Activated B cell treated with CpG ODN at 0.5 μM for 24 hours (primary cell): ENCODE measurements at regions of chr17 and their contacts with region 1.

Region 1: DNA sequence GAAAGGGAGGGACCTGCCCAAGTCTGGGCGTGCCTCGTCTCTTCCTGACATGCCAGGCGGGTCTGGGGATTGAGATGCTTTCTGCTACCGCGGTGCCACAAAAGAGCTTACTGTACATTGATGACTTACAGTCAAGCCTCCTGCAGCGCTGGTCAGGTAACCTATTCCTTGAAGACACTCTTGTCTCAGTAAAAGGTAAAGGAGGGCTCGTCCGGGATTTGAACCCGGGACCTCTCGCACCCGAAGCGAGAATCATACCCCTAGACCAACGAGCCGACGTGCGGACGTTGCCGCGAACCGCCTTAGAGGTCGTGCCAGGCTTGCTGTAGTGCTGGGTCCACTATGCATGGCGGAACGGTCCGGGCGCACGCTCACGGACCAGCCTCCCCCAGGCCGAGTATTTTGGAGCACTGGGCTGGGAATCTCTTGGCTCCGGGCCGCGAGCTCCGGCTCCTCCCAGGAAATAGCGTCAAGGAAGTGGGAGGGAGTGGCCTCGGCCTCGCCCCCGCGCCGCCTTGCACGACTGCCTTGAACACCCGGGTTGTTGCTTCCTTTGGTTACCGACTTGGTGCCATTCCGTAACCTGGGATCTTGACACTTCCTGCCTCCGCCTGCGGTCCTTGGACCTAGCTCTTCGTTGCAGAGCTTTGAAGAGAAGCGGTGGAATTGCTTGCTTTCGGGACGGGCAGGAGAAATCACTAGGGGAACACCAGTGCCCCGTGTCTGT is 12.4 kb upstream of the AURKB start:
- DNase-seq: peak; percentile 80
- ATAC-seq: peak; percentile 51
- H3K4me3 Mint-ChIP-seq: peak overlapping the region; percentile 97
- H3K27ac Mint-ChIP-seq: peak overlapping the region; percentile 97
- H3K4me1 Mint-ChIP-seq: peaks cover 68% of the 10 kb centered on the region
- H3K27me3 Mint-ChIP-seq: peaks cover 11% of the 10 kb centered on the region
- CTCF ChIP-seq: no peak

Region 2: DNA sequence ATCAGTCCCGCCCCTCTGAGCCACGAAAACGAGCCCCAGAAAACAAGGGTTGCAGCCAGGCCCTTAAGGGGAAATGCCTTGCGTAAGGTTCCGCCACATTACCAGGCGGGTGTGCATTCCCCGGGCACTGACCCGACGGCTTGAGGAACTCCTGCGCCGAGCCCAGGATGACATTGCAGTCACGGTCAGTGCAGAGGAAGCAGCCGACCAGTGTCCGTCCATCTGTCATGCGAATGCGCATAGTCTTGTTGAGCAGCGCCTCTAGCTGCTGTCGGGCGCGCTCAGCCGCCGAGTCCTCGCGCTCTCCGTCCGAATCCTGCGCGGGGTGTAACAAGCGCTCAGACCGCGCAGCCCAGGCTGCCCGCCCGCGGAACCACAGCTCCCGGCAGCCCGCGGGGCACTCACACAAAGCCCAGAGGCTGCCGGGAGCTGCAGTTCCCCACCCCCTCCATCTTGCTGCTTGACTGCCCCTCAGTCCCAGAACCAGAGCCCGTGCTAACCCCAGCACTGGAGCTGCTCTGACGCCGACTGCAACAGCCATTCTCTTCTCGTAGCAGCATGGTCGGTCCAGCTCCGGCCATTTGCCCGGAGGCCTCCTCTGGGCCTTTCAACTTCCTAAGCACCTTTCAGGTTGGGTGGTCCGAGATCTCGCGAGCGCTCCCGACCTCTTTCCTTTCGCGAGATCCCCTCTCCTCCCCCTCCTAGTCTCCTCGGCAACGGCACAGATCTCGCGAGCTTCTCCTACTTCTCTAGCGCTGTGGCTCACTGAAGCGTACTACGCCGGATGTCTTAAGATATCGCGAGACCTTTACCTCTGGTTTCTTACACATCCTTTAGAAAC is 365.7 kb before region 1 on chr17 and contains the start of gene NAA38:
- CTCF ChIA-PET with region 1: no interaction called
- POLR2A ChIA-PET with region 1: interaction called, 10 read pairs
- intact Hi-C with region 1: loop called (anchors 10 kb)
- DNase-seq: peak; percentile 88
- ATAC-seq: peak; percentile 83
- H3K4me3 Mint-ChIP-seq: no peak within 1 kb of the TSS
- H3K27ac Mint-ChIP-seq: no peak within 1 kb of the TSS
- H3K4me1 Mint-ChIP-seq: peaks cover 5% of the 10 kb centered on the region
- H3K27me3 Mint-ChIP-seq: no peaks in the 10 kb centered on the region
- CTCF ChIP-seq: no peak
- total RNA-seq, gene NAA38: 36.0 and 47.9 TPM in 2 replicates

Region 3: DNA sequence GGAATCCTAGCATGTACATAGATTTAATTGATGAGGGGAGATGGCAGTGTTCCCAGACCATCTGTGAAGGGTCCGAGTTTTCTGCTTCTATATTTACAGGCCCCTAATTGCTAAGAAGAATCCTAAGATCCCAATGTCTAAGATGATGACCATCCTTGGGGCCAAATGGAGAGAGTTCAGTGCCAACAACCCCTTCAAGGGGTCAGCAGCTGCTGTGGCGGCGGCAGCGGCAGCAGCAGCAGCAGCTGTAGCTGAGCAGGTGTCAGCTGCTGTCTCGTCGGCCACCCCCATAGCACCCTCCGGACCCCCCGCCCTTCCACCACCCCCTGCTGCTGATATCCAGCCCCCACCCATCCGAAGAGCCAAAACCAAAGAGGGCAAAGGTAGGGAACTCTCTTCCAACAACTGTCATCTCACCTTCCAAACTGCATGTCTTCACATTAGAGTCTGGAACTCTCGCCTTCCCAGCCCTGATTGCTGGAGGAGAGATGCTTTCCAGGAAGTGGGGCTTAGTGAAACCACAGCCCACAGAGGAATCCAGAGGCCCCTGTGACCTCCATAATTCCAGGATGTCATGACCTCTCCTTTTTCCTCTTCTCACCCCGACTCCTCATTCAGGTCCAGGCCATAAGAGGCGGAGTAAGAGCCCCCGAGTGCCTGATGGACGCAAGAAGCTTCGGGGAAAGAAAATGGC is 329.5 kb before region 1 on chr17:
- CTCF ChIA-PET with region 1: no interaction called
- POLR2A ChIA-PET with region 1: no interaction called
- intact Hi-C with region 1: no loop called
- DNase-seq: no peak
- ATAC-seq: no peak
- H3K4me3 Mint-ChIP-seq: no peak overlapping the region
- H3K27ac Mint-ChIP-seq: no peak overlapping the region
- H3K4me1 Mint-ChIP-seq: no peaks in the 10 kb centered on the region
- H3K27me3 Mint-ChIP-seq: no peaks in the 10 kb centered on the region
- CTCF ChIP-seq: no peak

Region 4: GRCh38 chr17:8118769-8119580 is 103.8 kb before region 1 on chr17:
- CTCF ChIA-PET with region 1: interaction called, 21 read pairs
- POLR2A ChIA-PET with region 1: interaction called, 45 read pairs
- intact Hi-C with region 1: loop called (anchors 1 kb)
- DNase-seq: peak; percentile 81
- ATAC-seq: peak; percentile 68
- H3K4me3 Mint-ChIP-seq: peak overlapping the region; percentile 93
- H3K27ac Mint-ChIP-seq: peak overlapping the region; percentile 96
- H3K4me1 Mint-ChIP-seq: peaks cover 58% of the 10 kb centered on the region
- H3K27me3 Mint-ChIP-seq: peaks cover 56% of the 10 kb centered on the region
- CTCF ChIP-seq: peak; percentile 26

Region 5: DNA sequence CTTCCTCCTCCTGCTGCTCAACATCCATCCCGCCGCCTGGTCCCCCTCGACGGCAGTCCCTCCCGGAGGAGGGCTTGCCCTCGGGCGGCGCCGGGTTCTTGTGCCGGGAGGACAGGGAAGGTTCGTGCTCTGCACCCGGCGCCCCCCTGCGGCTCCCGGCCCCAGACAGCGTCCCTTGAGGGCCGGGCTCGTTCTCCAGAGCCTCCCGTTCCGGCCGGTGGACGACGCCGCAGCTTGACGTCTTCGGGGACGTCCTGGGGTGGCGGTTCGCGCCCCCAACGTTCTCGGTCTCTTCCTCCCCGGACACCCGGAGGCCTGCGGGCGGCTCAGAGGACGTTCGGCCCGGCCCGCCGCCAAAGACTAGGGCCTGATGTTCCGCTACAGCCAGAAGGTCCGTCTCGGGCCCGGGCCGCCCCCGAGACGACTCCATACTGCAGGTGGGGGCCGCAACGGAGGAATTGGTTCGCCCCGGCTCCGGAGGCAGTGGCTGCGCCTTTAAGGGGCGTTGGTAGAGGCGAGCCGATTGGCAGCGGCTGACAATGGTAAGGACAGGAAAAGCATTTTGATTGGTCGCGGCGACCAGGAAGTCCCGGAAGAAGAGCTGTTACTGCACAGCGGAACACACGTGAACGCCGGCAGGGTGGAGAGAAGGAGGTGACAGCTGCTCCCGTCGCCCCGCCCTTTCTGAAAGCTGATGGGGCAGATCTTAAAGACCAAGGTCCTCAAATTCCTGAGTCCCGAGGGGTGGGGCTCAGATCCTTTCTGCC is 32.9 kb before region 1 on chr17 and contains the start of gene BORCS6:
- CTCF ChIA-PET with region 1: interaction called, 20 read pairs
- POLR2A ChIA-PET with region 1: interaction called, 316 read pairs
- intact Hi-C with region 1: loop called (anchors 1 kb)
- DNase-seq: peak; percentile 84
- ATAC-seq: peak; percentile 67
- H3K4me3 Mint-ChIP-seq: no peak within 1 kb of the TSS
- H3K27ac Mint-ChIP-seq: peak within 1 kb of the TSS; percentile 95
- H3K4me1 Mint-ChIP-seq: peaks cover 11% of the 10 kb centered on the region
- H3K27me3 Mint-ChIP-seq: no peaks in the 10 kb centered on the region
- CTCF ChIP-seq: no peak
- total RNA-seq, gene BORCS6: 12.3 and 12.8 TPM in 2 replicates

Region 6: GRCh38 chr17:8237175-8237574 is 14.4 kb after region 1 on chr17:
- CTCF ChIA-PET with region 1: no interaction called
- POLR2A ChIA-PET with region 1: interaction called, 10 read pairs
- intact Hi-C with region 1: loop called (anchors 1 kb)
- DNase-seq: no peak
- ATAC-seq: no peak
- H3K4me3 Mint-ChIP-seq: no peak overlapping the region
- H3K27ac Mint-ChIP-seq: no peak overlapping the region
- H3K4me1 Mint-ChIP-seq: peaks cover 2% of the 10 kb centered on the region
- H3K27me3 Mint-ChIP-seq: no peaks in the 10 kb centered on the region
- CTCF ChIP-seq: no peak

Region 7: GRCh38 chr17:8288336-8289102 is 65.7 kb after region 1 on chr17 and contains the start of gene RANGRF:
- CTCF ChIA-PET with region 1: no interaction called
- POLR2A ChIA-PET with region 1: interaction called, 68 read pairs
- intact Hi-C with region 1: loop called (anchors 1 kb)
- DNase-seq: peak; percentile 77
- ATAC-seq: peak; percentile 93
- H3K4me3 Mint-ChIP-seq: peak within 1 kb of the TSS; percentile 98
- H3K27ac Mint-ChIP-seq: peak within 1 kb of the TSS; percentile 97
- H3K4me1 Mint-ChIP-seq: peaks cover 51% of the 10 kb centered on the region
- H3K27me3 Mint-ChIP-seq: no peaks in the 10 kb centered on the region
- CTCF ChIP-seq: no peak
- total RNA-seq, gene RANGRF: 50.1 and 50.9 TPM in 2 replicates

Region 8: DNA sequence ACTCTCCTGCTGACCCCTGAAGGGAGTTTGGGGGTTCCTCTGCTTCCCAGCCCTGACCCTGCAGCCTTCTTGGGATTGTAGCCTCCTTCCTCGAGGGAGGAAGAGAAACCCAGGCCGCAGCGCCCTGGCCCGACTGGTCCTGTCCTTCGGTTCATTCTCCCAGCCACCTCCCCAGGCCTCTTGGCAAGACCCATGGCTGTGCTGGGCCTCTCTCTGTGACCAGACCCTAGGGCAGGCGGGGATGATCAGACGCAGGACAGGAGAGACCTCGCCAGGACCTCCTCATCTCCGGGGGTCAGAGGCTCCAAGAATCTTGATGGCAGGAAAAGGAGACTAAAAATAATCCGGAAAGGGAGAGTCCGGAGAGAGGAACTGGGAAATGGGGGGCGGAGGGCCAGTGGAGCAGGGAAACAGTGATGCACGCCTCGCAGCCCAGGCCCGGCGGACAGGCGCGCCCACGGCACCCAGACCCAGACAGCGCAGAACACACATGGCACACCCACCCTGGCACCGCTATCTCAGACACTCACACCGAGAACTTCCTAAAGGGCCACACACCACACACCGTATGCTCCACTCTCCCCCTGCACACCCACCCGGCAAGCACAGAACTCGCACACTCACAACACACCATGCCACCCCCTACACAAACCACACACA is 88.5 kb after region 1 on chr17:
- CTCF ChIA-PET with region 1: no interaction called
- POLR2A ChIA-PET with region 1: no interaction called
- intact Hi-C with region 1: no loop called
- DNase-seq: no peak
- ATAC-seq: no peak
- H3K4me3 Mint-ChIP-seq: no peak overlapping the region
- H3K27ac Mint-ChIP-seq: no peak overlapping the region
- H3K4me1 Mint-ChIP-seq: no peaks in the 10 kb centered on the region
- H3K27me3 Mint-ChIP-seq: peaks cover 37% of the 10 kb centered on the region
- CTCF ChIP-seq: no peak

Region 9: DNA sequence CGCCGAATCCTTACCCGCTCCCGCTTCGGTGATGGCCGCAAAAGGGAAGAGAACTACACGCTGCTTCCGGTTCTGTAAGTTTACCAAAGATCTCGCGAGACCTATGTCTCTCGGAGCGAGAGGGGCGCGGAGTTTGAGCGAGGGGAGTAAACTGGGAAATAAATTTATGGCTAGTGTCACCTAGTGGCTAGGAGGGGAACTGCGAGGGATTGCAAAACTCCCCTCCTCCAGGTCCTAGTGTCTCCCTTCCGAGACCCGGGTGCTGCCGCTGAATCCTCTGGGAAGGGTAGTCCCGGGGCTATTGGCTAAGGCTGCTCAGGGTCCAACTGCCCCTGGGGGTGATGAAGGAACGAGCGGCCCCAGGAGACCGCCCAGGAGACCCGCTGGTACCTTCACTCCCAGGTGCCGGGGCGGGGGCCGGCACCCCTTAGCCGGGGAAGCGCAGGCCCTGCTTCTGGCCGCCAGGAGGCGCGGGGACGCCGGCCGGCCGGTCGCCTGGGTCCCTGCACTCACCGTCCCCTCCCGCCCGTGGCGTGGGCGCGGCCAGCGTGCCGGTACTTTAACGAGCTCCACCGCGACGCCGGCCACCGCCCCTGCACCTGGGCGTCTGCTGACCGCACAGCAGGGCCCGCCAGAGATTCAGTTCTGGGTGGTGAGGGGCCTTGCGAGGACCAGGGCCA is 160.5 kb after region 1 on chr17 and contains the start of gene RPL26:
- CTCF ChIA-PET with region 1: interaction called, 4 read pairs
- POLR2A ChIA-PET with region 1: interaction called, 4 read pairs
- intact Hi-C with region 1: loop called (anchors 1 kb)
- DNase-seq: peak; percentile 94
- ATAC-seq: peak; percentile 90
- H3K4me3 Mint-ChIP-seq: peak within 1 kb of the TSS; percentile 98
- H3K27ac Mint-ChIP-seq: peak within 1 kb of the TSS; percentile 95
- H3K4me1 Mint-ChIP-seq: peaks cover 56% of the 10 kb centered on the region
- H3K27me3 Mint-ChIP-seq: no peaks in the 10 kb centered on the region
- CTCF ChIP-seq: peak; percentile 87
- total RNA-seq, gene RPL26: 3,512 and 4,174 TPM in 2 replicates